Activated naive CD4-positive, alpha-beta T cell treated with anti-CD3 and anti-CD28 coated beads for 36 hours (primary cell): ENCODE measurements at regions of chr5 and their contacts with region 1.

Region 1: DNA sequence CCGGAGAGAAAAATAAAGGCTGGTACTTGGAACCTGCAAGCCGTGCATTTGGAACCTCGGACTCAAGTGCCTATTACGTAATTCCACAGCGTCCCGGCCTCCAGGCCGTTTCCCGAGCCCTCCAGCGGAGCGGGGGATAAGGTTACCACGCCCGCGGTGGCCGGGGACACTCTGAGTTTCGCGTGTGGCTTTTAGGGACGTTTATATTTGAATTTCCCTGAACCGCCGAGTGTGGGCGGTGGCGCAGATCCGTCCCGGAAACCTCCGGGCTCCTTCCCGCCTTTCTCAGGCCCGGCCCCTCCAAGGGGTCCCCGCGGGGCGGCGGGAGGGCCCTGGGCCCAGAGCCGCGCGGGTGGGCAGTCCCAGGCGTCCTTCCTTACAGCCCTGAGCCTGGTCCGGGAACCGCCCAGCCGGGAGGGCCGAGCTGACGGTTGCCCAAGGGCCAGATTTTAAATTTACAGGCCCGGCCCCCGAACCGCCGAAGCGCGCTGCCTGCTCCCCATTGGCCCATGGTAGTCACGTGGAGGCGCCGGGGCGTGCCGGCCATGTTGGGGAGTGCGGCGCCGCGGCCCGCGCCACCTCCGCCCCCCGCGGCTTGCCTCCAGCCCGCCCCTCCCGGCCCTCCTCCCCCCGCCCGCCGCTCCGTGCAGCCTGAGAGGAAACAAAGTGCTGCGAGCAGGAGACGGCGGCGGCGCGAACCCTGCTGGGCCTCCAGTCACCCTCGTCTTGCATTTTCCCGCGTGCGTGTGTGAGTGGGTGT is at the start of gene LMNB1:
- DNase-seq: peak; percentile 97
- H3K4me3 Mint-ChIP-seq: peak within 1 kb of the TSS; percentile 96
- H3K27ac Mint-ChIP-seq: peak within 1 kb of the TSS; percentile 97
- H3K4me1 Mint-ChIP-seq: peaks cover 26% of the 10 kb centered on the region
- H3K27me3 Mint-ChIP-seq: no peaks in the 10 kb centered on the region
- total RNA-seq, gene LMNB1: 274 to 289 TPM

Region 2: DNA sequence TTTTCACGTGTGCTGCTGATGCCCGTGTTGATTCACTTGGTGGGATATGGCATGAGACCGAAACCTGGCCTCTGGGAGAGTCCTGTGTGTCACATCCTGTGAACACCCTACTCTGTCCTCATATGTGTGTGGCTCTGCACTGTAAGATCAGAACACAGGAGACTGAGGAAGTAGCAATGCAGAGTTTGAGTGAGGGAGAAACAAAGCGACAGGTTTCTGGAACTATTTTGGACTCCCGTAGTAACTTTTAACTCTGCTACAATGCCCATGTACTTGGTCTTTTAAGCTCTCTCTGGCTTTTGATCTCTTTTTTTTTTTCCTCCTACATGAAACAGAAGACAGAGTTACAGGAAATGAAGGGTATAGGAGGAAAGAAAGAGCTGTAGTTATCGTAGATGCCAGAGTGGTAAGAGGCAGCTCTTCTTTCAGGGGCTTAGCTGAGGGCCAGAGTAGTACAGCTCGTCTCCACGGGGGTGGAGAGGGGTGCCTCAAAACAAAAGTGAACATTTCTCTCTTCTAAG is 326.9 kb before region 1 on chr5:
- CTCF ChIA-PET with region 1: no interaction called
- intact Hi-C with region 1: loop called (anchors 1 kb)
- DNase-seq: peak; percentile 90
- H3K4me3 Mint-ChIP-seq: peak overlapping the region; percentile 82
- H3K27ac Mint-ChIP-seq: peak overlapping the region; percentile 100
- H3K4me1 Mint-ChIP-seq: peaks cover 81% of the 10 kb centered on the region
- H3K27me3 Mint-ChIP-seq: no peaks in the 10 kb centered on the region

Region 3: DNA sequence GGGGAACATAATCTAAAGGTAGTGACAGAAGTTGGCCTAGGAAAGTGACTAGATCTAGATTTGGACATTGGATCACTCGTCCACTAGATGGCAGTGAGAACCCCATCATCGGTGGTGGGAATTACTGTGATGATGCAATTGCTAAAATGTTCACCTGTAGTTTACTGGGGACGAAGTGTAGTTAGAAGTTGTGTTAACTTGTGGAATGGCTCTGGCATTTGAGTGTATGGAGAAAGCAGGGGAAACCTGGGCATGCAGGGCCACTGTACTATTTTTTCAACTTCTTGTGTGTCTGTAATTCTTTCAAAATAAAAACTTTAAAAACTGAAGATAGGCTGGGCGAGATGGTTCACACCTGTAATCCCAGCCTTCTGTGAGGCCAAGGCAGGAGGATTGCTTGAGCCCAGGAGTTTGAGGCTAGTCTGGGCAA is 100.5 kb before region 1 on chr5:
- CTCF ChIA-PET with region 1: interaction called, 154 read pairs
- intact Hi-C with region 1: loop called (anchors 1 kb)
- DNase-seq: peak; percentile 85
- H3K4me3 Mint-ChIP-seq: no peak overlapping the region
- H3K27ac Mint-ChIP-seq: peak overlapping the region; percentile 67
- H3K4me1 Mint-ChIP-seq: peaks cover 4% of the 10 kb centered on the region
- H3K27me3 Mint-ChIP-seq: no peaks in the 10 kb centered on the region

Region 4: GRCh38 chr5:126757713-126758357 is 18.8 kb before region 1 on chr5:
- CTCF ChIA-PET with region 1: interaction called, 12 read pairs
- intact Hi-C with region 1: loop called (anchors 1 kb)
- DNase-seq: no peak
- H3K4me3 Mint-ChIP-seq: no peak overlapping the region
- H3K27ac Mint-ChIP-seq: peak overlapping the region; percentile 54
- H3K4me1 Mint-ChIP-seq: peaks cover 44% of the 10 kb centered on the region
- H3K27me3 Mint-ChIP-seq: no peaks in the 10 kb centered on the region

Region 5: GRCh38 chr5:126988021-126988569 is 211.4 kb after region 1 on chr5:
- CTCF ChIA-PET with region 1: no interaction called
- intact Hi-C with region 1: loop called (anchors 1 kb)
- DNase-seq: peak; percentile 77
- H3K4me3 Mint-ChIP-seq: peak overlapping the region; percentile 20
- H3K27ac Mint-ChIP-seq: peak overlapping the region; percentile 76
- H3K4me1 Mint-ChIP-seq: peaks cover 51% of the 10 kb centered on the region
- H3K27me3 Mint-ChIP-seq: no peaks in the 10 kb centered on the region

Region 6: DNA sequence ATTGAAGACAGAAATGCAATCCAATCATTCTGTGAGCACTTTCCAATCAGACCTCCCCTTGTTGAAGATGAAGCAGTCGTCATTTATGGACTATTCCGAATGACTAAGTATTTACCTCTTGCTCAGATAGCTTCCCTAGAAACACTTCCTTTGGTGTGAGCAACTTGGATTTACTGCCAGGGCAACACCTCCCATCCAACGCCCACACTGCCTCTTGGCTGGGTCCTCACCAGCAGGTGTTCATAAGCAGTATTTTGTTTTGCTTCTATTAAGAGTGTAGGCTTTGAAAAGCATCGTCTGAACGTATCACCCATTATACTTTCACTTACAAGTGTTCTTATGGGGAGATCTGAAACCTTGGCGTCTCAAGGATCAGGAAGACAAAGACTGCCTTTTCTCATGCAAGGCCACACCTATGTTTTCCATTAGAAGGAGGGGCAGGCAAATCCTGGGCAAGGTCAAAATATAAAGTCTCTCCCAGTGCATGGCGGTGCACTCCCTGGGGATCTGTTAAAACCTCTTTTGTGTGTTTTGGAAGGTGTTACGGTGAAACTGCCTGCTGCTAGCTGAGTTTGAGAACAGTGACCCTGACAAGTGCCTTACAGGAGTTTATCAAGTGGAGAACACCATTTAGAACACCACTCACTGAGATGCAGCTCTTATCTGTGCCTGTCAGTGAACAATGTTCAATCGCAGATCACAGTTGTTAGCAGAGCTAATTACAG is 264.3 kb after region 1 on chr5:
- CTCF ChIA-PET with region 1: no interaction called
- intact Hi-C with region 1: no loop called
- DNase-seq: no peak
- H3K4me3 Mint-ChIP-seq: no peak overlapping the region
- H3K27ac Mint-ChIP-seq: no peak overlapping the region
- H3K4me1 Mint-ChIP-seq: no peaks in the 10 kb centered on the region
- H3K27me3 Mint-ChIP-seq: peaks cover 2% of the 10 kb centered on the region

Region 7: GRCh38 chr5:127186657-127187056 is 410.0 kb after region 1 on chr5:
- CTCF ChIA-PET with region 1: no interaction called
- intact Hi-C with region 1: no loop called
- DNase-seq: no peak
- H3K4me3 Mint-ChIP-seq: no peak overlapping the region
- H3K27ac Mint-ChIP-seq: no peak overlapping the region
- H3K4me1 Mint-ChIP-seq: no peaks in the 10 kb centered on the region
- H3K27me3 Mint-ChIP-seq: no peaks in the 10 kb centered on the region

Region 8: GRCh38 chr5:127505905-127506304 is 729.2 kb after region 1 on chr5:
- CTCF ChIA-PET with region 1: no interaction called
- intact Hi-C with region 1: no loop called
- DNase-seq: no peak
- H3K4me3 Mint-ChIP-seq: no peak overlapping the region
- H3K27ac Mint-ChIP-seq: no peak overlapping the region
- H3K4me1 Mint-ChIP-seq: no peaks in the 10 kb centered on the region
- H3K27me3 Mint-ChIP-seq: no peaks in the 10 kb centered on the region

Region 9: GRCh38 chr5:127517480-127518318 is 741.0 kb after region 1 on chr5 and contains the start of gene PRRC1:
- CTCF ChIA-PET with region 1: no interaction called
- intact Hi-C with region 1: loop called (anchors 1 kb)
- DNase-seq: peak; percentile 83
- H3K4me3 Mint-ChIP-seq: peak within 1 kb of the TSS; percentile 81
- H3K27ac Mint-ChIP-seq: peak within 1 kb of the TSS; percentile 63
- H3K4me1 Mint-ChIP-seq: peaks cover 31% of the 10 kb centered on the region
- H3K27me3 Mint-ChIP-seq: no peaks in the 10 kb centered on the region
- total RNA-seq, gene PRRC1: 34.1 to 35.1 TPM